ENCODE measurements at regions of chr6 and their contacts with region 1.

Region 1: GRCh38 chr6:82646214-82646580 is 282.6 kb downstream of the TPBG start:
- DNase-seq: no peak
- H3K4me3 ChIP-seq: no peak overlapping the region
- CTCF ChIP-seq: no peak
- POLR2A ChIP-seq: no peak

Region 2: GRCh38 chr6:82624212-82624611 is 22.0 kb before region 1 on chr6:
- intact Hi-C with region 1: no loop called
- DNase-seq: no peak
- H3K4me3 ChIP-seq: no peak overlapping the region
- CTCF ChIP-seq: no peak
- POLR2A ChIP-seq: no peak

Region 3: GRCh38 chr6:82701336-82701735 is 55.1 kb after region 1 on chr6:
- intact Hi-C with region 1: loop called (anchors 2 kb)
- DNase-seq: no peak
- H3K4me3 ChIP-seq: no peak overlapping the region
- CTCF ChIP-seq: no peak
- POLR2A ChIP-seq: no peak

Measured in lower leg skin (tissue), 4 donors.